ENCODE measurements at regions of chr14 and their contacts with region 1.

Region 1: DNA sequence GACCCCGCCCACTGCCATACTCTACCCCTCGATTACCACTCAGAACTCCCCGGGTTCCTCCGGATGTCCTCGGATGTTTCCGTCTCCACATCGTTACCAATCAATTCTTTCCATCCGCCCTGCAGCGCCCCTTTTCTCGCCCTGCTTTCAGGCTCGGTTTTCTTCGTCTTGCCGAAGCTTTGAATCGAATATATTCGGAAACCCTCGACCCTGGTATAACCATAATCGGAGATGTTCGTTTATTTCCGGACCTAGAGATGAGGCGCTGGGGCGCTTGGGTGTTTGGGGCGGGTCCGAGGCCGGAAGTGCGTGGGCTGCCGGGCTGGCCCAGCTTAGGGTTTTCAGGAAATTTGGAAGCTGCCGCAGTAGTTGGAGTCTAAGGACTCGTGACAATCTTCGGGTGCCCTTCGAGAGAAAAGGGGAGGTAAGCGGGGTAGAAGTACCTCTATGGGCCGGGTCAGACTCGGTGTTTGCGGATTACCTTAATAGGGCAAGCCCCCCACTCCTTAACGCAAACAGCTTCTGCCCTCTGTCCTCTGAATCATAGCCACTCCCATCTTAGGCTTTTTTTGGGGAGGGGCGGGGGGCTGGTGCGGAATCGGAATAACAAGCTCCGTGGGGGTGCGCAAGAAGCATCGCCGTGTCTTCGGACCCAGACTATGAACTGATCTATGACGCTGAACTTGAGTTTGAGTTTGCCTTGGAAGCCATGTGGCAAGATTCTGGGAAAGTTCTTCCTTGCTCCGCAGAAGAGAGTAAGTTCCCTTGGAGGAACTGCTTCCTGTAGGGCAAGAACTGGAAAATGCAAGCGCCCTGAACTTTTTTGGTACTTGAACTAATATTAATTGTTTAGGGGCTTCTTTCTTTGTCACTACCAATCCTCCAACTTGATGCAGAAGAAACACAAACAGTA is at the start of gene C14orf119:
- DNase-seq: peak in 8 of 9 donors; percentile 88 to 100 (median 100)
- ATAC-seq: peak; percentile 93
- H3K4me3 ChIP-seq: peak within 1 kb of the TSS; percentile 88
- H3K4me3 Mint-ChIP-seq: no peak within 1 kb of the TSS
- H3K27ac ChIP-seq: peak within 1 kb of the TSS; percentile 97
- H3K27ac Mint-ChIP-seq: no peak within 1 kb of the TSS
- H3K4me1 ChIP-seq: peaks cover 26 to 32% of the 10 kb centered on the region in 2 donors
- H3K4me1 Mint-ChIP-seq: peaks cover 3 to 63% (median 33%) of the 10 kb centered on the region in 7 donors
- H3K27me3 ChIP-seq: no peaks in the 10 kb centered on the region
- H3K27me3 Mint-ChIP-seq: no peaks in the 10 kb centered on the region
- total RNA-seq, gene C14orf119: 6.0 to 49.9 (median 43.4) TPM

Region 2: DNA sequence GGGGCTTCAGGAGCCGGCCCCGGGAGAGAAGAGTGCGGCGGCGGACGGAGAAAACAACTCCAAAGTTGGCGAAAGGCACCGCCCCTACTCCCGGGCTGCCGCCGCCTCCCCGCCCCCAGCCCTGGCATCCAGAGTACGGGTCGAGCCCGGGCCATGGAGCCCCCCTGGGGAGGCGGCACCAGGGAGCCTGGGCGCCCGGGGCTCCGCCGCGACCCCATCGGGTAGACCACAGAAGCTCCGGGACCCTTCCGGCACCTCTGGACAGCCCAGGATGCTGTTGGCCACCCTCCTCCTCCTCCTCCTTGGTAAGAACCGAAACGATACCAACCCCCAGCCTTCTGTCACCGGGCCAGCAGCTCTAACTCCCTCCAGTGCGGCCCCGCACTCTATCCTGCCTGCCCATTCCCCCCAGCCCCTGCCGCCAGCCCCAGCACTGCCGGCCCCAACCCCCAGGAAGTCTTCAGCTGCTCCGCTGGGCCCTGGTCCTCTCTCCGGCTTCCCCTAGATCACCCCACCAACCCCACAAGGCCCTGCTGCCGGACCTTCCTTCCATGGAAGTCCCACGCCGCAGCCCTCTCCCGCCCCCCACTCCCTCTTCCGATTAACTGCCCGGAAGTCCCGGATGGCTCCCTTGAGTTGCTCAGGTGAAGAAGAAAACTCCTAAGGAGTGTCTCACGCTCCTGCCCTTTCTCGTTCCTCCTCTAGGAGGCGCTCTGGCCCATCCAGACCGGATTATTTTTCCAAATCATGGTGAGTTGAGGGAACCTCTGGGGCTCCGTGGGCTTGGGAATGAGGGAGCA is 223.2 kb before region 1 on chr14:
- CTCF ChIA-PET with region 1: no interaction called
- POLR2A ChIA-PET with region 1: interaction called, 4 read pairs
- intact Hi-C with region 1: loop called in 1 of 2 experiments (anchors 5 kb)
- DNase-seq: peak; percentile 55 to 76 (median 69)
- ATAC-seq: peak; percentile 57
- H3K4me3 ChIP-seq: peak overlapping the region; percentile 72
- H3K4me3 Mint-ChIP-seq: peak overlapping the region; percentile 87 to 98 (median 95)
- H3K27ac ChIP-seq: peak overlapping the region; percentile 86
- H3K27ac Mint-ChIP-seq: peak overlapping the region; percentile 83 to 98 (median 94)
- H3K4me1 ChIP-seq: peaks cover 20 to 33% of the 10 kb centered on the region in 2 donors
- H3K4me1 Mint-ChIP-seq: peaks cover 26 to 49% (median 29%) of the 10 kb centered on the region in 7 donors
- H3K27me3 ChIP-seq: no peaks in the 10 kb centered on the region
- H3K27me3 Mint-ChIP-seq: no peaks in the 10 kb centered on the region

Region 3: DNA sequence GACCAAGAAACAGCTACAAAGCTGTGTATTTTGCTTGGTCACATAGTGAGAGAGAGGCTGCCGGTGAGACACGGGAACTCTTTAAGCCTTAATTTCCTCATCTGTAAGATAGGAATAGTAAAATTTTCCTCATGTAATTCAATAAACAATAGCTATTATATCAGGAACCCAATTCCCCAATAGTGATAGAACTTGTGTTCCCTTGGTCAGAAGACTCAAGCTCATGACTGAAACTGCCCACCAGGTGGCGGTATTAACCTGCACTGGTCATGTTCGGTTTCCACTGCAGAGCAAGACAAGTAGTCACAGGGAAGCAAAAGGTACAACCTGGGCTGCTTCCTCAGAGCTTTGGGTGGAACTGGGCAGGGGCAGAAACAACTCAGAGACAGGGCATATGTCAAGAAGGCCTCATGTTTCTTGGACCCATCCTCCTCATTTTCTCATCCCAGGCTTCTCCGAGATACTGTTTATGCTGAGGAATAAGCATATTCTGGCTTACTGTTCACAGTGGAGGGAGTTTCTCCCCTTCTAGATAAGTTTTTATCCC is 108.9 kb before region 1 on chr14:
- CTCF ChIA-PET with region 1: interaction called, 3 read pairs
- POLR2A ChIA-PET with region 1: interaction called, 6 read pairs
- intact Hi-C with region 1: loop called in 1 of 2 experiments (anchors 1 kb)
- DNase-seq: peak; percentile 65 to 87 (median 82)
- ATAC-seq: peak; percentile 79
- H3K4me3 ChIP-seq: no peak overlapping the region
- H3K4me3 Mint-ChIP-seq: no peak overlapping the region
- H3K27ac ChIP-seq: no peak overlapping the region
- H3K27ac Mint-ChIP-seq: peak overlapping the region in 4 of 9 donors; percentile 2 to 39 (median 24)
- H3K4me1 ChIP-seq: peaks cover 0 to 8% of the 10 kb centered on the region in 2 donors
- H3K4me1 Mint-ChIP-seq: peaks cover 0 to 5% (median 0%) of the 10 kb centered on the region in 7 donors
- H3K27me3 ChIP-seq: no peaks in the 10 kb centered on the region
- H3K27me3 Mint-ChIP-seq: no peaks in the 10 kb centered on the region

Region 4: GRCh38 chr14:23068476-23069412 is 26.7 kb before region 1 on chr14:
- CTCF ChIA-PET with region 1: interaction called, 21 read pairs
- POLR2A ChIA-PET with region 1: interaction called, 25 read pairs
- intact Hi-C with region 1: loop called (anchors 1 kb)
- DNase-seq: peak; percentile 37 to 83 (median 74)
- ATAC-seq: peak; percentile 90
- H3K4me3 ChIP-seq: no peak overlapping the region
- H3K4me3 Mint-ChIP-seq: peak overlapping the region in 7 of 10 donors; percentile 56 to 76 (median 64)
- H3K27ac ChIP-seq: no peak overlapping the region
- H3K27ac Mint-ChIP-seq: peak overlapping the region; percentile 63 to 88 (median 78)
- H3K4me1 ChIP-seq: peaks cover 16 to 28% of the 10 kb centered on the region in 2 donors
- H3K4me1 Mint-ChIP-seq: peaks cover 30 to 58% (median 46%) of the 10 kb centered on the region in 7 donors
- H3K27me3 ChIP-seq: no peaks in the 10 kb centered on the region
- H3K27me3 Mint-ChIP-seq: no peaks in the 10 kb centered on the region

Region 5: DNA sequence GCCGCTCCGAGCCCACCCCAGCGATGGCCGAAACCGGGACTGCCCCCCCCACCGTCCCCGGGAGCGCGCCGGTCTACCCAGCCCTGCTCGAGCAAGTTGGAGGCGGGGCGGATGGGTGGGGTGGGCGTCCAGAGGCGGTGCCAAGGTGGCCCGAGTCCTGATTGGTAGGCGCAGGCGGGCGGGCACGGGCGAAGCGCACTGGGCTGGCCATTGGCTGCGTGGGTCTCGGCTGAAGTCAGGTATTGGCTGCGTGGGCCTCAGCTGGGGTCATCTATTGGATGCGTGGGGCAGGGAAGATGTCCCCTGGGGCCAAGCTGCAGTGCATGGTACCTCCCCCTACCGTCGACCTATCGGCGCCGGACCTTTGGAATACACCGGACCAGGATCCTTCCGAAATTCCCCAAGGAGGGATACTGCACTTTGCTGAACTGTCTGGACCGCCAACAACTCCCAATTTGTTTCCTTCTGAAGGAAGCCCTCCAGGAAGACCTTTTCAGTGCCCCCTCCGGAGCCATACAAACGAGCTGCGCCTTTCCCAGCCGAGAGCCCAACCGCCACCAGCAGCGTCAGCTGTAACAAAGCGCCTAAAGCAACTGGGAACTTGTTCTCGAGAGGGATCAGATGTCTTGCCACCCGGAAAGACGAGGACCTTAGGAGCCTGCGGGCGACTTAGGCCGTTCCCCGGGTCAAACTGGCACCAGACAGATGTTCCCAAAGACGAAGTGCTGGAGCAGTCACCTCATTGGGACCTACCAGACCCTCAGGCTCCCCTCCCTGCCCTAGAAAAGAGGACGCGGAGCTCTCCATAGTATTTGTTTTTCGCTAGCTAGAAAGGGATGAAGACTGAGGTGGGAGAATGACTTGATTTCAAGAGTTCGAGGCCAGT is 190.8 kb after region 1 on chr14 and contains the start of gene HOMEZ:
- CTCF ChIA-PET with region 1: no interaction called
- POLR2A ChIA-PET with region 1: interaction called, 9 read pairs
- intact Hi-C with region 1: loop called (anchors 1 kb)
- DNase-seq: peak; percentile 89 to 97 (median 94)
- ATAC-seq: peak; percentile 99
- H3K4me3 ChIP-seq: peak within 1 kb of the TSS; percentile 84
- H3K4me3 Mint-ChIP-seq: peak within 1 kb of the TSS; percentile 92 to 100 (median 96)
- H3K27ac ChIP-seq: peak within 1 kb of the TSS; percentile 89
- H3K27ac Mint-ChIP-seq: peak within 1 kb of the TSS; percentile 83 to 98 (median 93)
- H3K4me1 ChIP-seq: peaks cover 3 to 6% of the 10 kb centered on the region in 2 donors
- H3K4me1 Mint-ChIP-seq: peaks cover 15 to 37% (median 30%) of the 10 kb centered on the region in 7 donors
- H3K27me3 ChIP-seq: no peaks in the 10 kb centered on the region
- H3K27me3 Mint-ChIP-seq: no peaks in the 10 kb centered on the region
- total RNA-seq, gene HOMEZ: 5.2 to 20.4 (median 15.5) TPM

Region 6: DNA sequence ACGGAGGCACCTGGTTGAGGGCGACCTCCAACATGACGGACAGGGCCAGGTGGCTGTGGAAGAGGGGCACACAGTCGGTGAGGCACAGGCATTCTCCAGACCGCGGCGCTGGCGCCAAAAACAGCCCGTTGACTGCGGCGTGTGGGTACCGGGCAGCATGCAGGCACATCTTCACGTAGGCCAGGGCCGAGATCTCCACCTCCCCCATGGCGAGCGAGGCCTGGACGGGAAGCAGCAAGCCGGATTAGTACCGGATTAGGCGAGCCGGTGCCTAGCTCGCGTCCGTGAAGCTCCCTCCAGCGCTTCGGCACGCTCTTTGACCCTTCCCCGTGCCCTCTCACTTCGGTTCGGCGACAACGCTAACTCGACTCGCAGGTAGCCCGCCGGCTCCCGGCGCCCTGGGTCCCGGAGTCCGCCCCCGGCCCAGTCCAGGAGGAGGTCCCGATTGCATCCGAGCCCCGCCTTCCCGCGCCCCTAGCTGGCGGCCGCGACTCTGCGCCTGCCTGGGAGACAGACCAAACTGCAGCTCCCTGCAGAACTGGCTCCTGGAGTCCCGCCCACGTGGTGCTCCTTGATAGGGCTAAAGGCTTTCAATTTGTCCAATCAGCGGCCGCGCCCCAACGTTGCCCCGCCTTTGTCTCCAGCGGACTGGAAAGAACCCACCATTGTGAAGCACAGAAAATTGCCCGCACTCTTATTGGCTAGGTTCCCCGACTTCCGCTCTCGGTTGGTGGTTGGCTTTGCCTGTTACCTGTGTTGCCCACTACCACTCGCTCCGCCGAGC is 1045.8 kb after region 1 on chr14 and contains the start of gene EMC9:
- CTCF ChIA-PET with region 1: no interaction called
- POLR2A ChIA-PET with region 1: no interaction called
- intact Hi-C with region 1: loop called in 1 of 2 experiments (anchors 10 kb)
- DNase-seq: peak; percentile 90 to 100 (median 99)
- ATAC-seq: peak; percentile 94
- H3K4me3 ChIP-seq: peak within 1 kb of the TSS; percentile 87
- H3K4me3 Mint-ChIP-seq: peak within 1 kb of the TSS; percentile 85 to 100 (median 94)
- H3K27ac ChIP-seq: peak within 1 kb of the TSS; percentile 83
- H3K27ac Mint-ChIP-seq: peak within 1 kb of the TSS; percentile 83 to 96 (median 93)
- H3K4me1 ChIP-seq: peaks cover 33 to 43% of the 10 kb centered on the region in 2 donors
- H3K4me1 Mint-ChIP-seq: peaks cover 47 to 87% (median 77%) of the 10 kb centered on the region in 7 donors
- H3K27me3 ChIP-seq: no peaks in the 10 kb centered on the region
- H3K27me3 Mint-ChIP-seq: no peaks in the 10 kb centered on the region
- total RNA-seq, gene EMC9: 9.0 to 25.5 (median 22.3) TPM

Region 7: GRCh38 chr14:24680516-24680915 is 1585.1 kb after region 1 on chr14:
- CTCF ChIA-PET with region 1: no interaction called
- POLR2A ChIA-PET with region 1: no interaction called
- intact Hi-C with region 1: no loop called
- DNase-seq: no peak
- ATAC-seq: no peak
- H3K4me3 ChIP-seq: no peak overlapping the region
- H3K4me3 Mint-ChIP-seq: peak overlapping the region in 1 of 10 donors; percentile 90
- H3K27ac ChIP-seq: no peak overlapping the region
- H3K27ac Mint-ChIP-seq: no peak overlapping the region
- H3K4me1 ChIP-seq: peaks cover 6 to 34% of the 10 kb centered on the region in 2 donors
- H3K4me1 Mint-ChIP-seq: peaks cover 19 to 49% (median 40%) of the 10 kb centered on the region in 7 donors
- H3K27me3 ChIP-seq: no peaks in the 10 kb centered on the region
- H3K27me3 Mint-ChIP-seq: peaks cover 0 to 4% (median 0%) of the 10 kb centered on the region in 5 donors

Measured in naive thymus-derived CD4-positive, alpha-beta T cell (primary cell).